Activated T-helper 1 cell treated with anti-CD3 and anti-CD28 coated beads, Interleukin-12 subunit alpha, Interleukin-12 subunit beta, Interleukin-2, Interleukin-4 antibody, amounts not matched to agents 30 ng/mL and 10 ng/mL and 1 ng/mL, durations not matched to agents 14 hours and 24 hours and 36 hours (primary cell): ENCODE measurements at regions of chr15 and their contacts with region 1.

Region 1: GRCh38 chr15:41811432-41812195 is 16.3 kb upstream of the JMJD7 start:
- DNase-seq: peak; percentile 61
- H3K4me3 Mint-ChIP-seq: no peak overlapping the region
- H3K27ac Mint-ChIP-seq: no peak overlapping the region
- H3K4me1 Mint-ChIP-seq: peaks cover 24% of the 10 kb centered on the region
- H3K27me3 Mint-ChIP-seq: no peaks in the 10 kb centered on the region

Region 2: GRCh38 chr15:41544650-41545015 is 267.0 kb before region 1 on chr15:
- intact Hi-C with region 1: loop called (anchors 5 kb)
- DNase-seq: no peak
- H3K4me3 Mint-ChIP-seq: peak overlapping the region; percentile 97
- H3K27ac Mint-ChIP-seq: no peak overlapping the region
- H3K4me1 Mint-ChIP-seq: peaks cover 17% of the 10 kb centered on the region
- H3K27me3 Mint-ChIP-seq: no peaks in the 10 kb centered on the region

Region 3: DNA sequence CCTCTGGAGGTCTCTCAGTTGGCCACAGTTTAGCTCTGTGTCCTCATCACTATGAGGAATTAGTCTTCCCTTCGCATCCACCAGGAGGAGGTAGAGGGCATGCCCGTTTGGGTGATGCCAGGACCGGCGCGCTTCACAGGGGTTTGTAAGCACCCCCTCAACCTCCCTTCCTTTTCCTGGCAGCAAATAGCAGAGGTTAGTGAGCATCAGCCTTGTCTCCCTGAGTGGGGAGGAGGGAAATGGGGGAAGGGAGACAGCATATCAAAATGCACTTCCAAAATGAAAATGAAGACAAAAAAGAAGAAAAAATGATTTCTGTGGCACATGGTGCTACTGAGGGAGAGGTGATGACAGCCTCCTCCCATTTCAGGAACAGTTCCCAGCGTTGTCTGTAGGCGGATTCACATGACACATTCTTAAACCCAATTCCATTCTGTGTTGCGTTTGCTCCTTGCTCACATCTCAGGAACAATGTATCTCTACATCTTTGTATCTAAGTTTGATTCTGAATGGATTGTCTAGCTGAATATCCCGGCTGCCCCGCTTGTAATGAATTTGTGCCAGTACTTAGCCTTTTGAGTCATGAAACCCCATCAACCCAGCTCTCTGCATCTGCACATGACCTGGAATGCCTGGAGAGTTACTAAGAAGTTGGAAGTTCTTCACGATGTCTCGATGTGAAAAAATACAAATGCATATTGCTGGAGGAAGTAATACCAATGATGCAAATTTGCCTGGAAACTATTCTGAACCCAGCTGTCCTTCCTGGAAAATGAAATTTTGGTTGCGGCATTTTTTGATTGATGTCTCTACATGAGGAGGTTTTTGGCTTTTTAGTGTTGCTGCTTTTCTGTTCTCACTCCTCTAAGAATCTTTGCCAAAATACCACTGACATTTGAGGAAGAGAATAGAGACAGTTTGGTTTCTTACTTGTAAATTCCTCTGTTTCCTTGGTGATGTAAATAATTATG is 207.4 kb before region 1 on chr15:
- intact Hi-C with region 1: loop called (anchors 1 kb)
- DNase-seq: peak; percentile 27
- H3K4me3 Mint-ChIP-seq: peak overlapping the region; percentile 68
- H3K27ac Mint-ChIP-seq: no peak overlapping the region
- H3K4me1 Mint-ChIP-seq: peaks cover 11% of the 10 kb centered on the region
- H3K27me3 Mint-ChIP-seq: peaks cover 34% of the 10 kb centered on the region

Region 4: DNA sequence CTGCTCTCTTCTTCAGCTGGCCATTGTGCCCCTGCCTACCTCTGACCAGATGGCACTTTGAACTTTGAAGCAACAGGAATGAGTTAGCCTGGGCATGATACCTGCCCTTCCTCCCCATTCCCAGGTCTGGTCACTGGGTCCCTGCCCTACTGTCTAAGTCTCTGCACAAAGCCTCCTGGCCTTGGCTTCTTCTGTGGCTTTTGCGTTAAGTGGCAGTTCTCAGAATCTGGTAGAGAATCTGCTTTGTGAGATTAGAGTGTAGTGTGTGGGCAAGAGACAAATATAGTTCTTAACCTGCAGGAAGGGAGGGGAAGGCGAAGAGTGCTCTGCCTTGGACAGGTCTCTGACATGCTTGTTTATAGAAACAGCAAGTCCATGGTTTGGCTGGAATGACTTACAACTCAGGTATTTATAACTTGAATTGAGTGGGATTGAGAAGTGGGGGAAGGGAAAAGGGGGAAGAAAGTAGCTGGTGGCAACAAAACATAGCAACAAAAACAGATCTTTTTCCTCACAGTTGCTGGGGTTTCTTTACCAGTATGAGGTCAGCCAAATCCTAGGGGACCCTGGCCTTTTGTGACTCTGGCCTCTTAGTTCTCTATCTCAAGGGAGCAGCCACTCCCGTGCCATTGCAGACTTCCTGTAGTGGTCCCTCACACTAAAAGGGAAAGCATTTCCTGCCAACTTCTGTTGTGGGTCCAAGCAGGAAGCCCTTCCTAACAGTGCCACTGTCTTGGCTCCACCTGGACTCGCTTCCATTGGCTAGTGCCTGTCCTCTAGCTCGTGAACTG is 20.7 kb before region 1 on chr15:
- intact Hi-C with region 1: loop called (anchors 2 kb)
- DNase-seq: no peak
- H3K4me3 Mint-ChIP-seq: peak overlapping the region; percentile 63
- H3K27ac Mint-ChIP-seq: peak overlapping the region; percentile 88
- H3K4me1 Mint-ChIP-seq: peaks cover 51% of the 10 kb centered on the region
- H3K27me3 Mint-ChIP-seq: no peaks in the 10 kb centered on the region

Region 5: GRCh38 chr15:41904541-41905005 is 93.0 kb after region 1 on chr15:
- intact Hi-C with region 1: loop called (anchors 1 kb)
- DNase-seq: peak; percentile 50
- H3K4me3 Mint-ChIP-seq: no peak overlapping the region
- H3K27ac Mint-ChIP-seq: no peak overlapping the region
- H3K4me1 Mint-ChIP-seq: peaks cover 8% of the 10 kb centered on the region
- H3K27me3 Mint-ChIP-seq: no peaks in the 10 kb centered on the region